Posterior cingulate gyrus (tissue), 11 donors: ENCODE measurements at regions of chr6 and their contacts with region 1.

Region 1: DNA sequence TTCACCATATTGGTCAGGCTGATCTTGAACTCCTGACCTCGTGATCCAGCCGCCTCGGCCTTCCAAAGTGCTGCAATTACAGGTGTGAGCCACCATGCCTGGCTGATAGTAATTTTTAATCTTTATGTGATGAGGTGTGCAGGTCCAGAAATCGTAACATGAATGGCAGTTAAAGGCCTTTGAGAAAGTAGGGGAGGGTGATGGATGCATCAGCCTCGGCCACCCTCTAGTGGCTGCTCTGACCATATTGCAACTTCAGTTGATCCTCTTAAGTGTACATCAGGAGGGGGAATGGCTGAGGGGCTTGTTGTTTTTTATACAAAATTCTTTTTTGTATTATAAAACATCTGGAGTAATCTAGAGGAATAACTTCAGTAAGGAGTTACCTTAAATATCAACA is 193.0 kb downstream of the ZFAND3 start:
- DNase-seq: peak in 7 of 10 donors; percentile 8 to 82 (median 35)

Region 2: GRCh38 chr6:37791156-37791919 is 221.2 kb before region 1 on chr6:
- intact Hi-C with region 1: loop called (anchors 1 kb)
- DNase-seq: peak; percentile 89 to 99 (median 92)